ENCODE measurements at regions of chr12 and their contacts with region 1.

Region 1: DNA sequence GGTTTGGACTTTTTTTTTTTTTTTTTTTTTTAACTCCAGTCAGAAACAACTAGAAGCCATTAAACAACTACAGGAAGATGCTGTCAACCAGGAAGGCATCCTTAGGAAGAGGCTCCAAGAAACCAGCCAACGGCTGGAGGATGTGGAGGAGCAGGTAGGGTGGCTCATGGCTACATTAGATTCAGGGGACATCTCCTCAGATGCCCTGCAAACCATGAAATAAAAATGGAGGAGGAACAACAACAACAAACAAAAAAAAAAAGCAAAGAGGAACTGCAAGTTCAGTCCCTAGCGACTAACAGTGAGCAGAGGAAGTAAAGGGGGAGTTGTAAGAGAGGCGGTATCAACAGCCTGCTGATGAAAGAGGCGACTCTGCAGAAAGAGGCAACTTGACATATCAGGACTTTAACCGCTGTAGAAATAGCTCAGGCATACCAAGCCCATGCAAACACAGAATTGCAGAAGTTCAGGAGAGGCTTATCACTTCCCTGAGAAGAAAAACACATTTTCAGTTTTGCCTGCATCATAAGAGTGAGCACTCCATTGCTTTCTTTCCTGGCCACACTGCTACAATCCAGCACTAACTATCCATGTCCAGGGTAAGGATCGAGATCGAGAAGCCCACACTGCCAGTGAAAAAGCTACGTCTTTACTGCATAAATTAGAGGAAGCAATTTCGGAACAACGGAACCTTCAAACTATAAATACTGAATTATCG is 103.5 kb upstream of the BCAT1 start:
- DNase-seq: peak; percentile 64
- ATAC-seq: peak; percentile 72
- H3K4me3 Mint-ChIP-seq: peak overlapping the region; percentile 96
- H3K27ac Mint-ChIP-seq: peak overlapping the region; percentile 100
- H3K4me1 Mint-ChIP-seq: peaks cover 32% of the 10 kb centered on the region
- H3K27me3 Mint-ChIP-seq: no peaks in the 10 kb centered on the region
- CTCF ChIP-seq: no peak

Region 2: GRCh38 chr12:24600996-24601395 is 451.4 kb before region 1 on chr12:
- CTCF ChIA-PET with region 1: no interaction called
- POLR2A ChIA-PET with region 1: no interaction called
- intact Hi-C with region 1: no loop called
- DNase-seq: no peak
- ATAC-seq: peak; percentile 37
- H3K4me3 Mint-ChIP-seq: no peak overlapping the region
- H3K27ac Mint-ChIP-seq: no peak overlapping the region
- H3K4me1 Mint-ChIP-seq: peaks cover 3% of the 10 kb centered on the region
- H3K27me3 Mint-ChIP-seq: peaks cover 2% of the 10 kb centered on the region
- CTCF ChIP-seq: no peak

Region 3: GRCh38 chr12:24902511-24903328 is 149.6 kb before region 1 on chr12:
- CTCF ChIA-PET with region 1: no interaction called
- POLR2A ChIA-PET with region 1: no interaction called
- intact Hi-C with region 1: loop called (anchors 5 kb)
- DNase-seq: peak; percentile 64
- ATAC-seq: peak; percentile 45
- H3K4me3 Mint-ChIP-seq: peak overlapping the region; percentile 87
- H3K27ac Mint-ChIP-seq: peak overlapping the region; percentile 88
- H3K4me1 Mint-ChIP-seq: peaks cover 35% of the 10 kb centered on the region
- H3K27me3 Mint-ChIP-seq: peaks cover 17% of the 10 kb centered on the region
- CTCF ChIP-seq: no peak

Region 4: DNA sequence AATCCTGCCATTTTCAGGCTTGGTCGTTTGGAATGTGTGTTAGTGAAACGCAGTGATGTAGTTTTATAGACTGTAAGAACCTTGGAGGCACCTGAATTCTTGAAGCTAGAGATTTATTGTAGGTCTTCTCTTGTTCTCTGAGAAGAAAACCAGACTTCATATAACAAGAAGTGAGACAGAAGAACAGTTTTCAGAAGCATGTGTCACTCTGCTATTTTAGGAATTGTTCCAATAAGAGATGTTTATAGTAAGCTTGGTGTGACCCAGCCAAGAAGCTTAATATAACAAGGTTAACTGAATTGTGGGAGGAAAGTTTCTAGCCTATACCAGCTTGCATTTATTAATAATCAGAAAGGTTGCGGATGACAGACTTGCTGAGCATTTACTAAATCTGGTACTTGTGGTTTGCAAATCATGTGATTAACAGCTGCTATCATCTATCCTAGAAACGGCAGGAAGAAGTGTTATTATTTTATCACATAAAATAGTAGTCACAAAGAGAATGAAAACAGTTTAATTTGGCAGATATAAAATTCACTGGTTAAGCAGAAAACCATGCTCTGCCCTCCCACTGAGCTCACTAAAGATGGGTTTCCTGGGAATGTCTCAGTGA is 54.3 kb before region 1 on chr12:
- CTCF ChIA-PET with region 1: interaction called, 15 read pairs
- POLR2A ChIA-PET with region 1: interaction called, 4 read pairs
- intact Hi-C with region 1: loop called (anchors 5 kb)
- DNase-seq: no peak
- ATAC-seq: peak; percentile 87
- H3K4me3 Mint-ChIP-seq: no peak overlapping the region
- H3K27ac Mint-ChIP-seq: peak overlapping the region; percentile 17
- H3K4me1 Mint-ChIP-seq: peaks cover 16% of the 10 kb centered on the region
- H3K27me3 Mint-ChIP-seq: no peaks in the 10 kb centered on the region
- CTCF ChIP-seq: no peak

Region 5: DNA sequence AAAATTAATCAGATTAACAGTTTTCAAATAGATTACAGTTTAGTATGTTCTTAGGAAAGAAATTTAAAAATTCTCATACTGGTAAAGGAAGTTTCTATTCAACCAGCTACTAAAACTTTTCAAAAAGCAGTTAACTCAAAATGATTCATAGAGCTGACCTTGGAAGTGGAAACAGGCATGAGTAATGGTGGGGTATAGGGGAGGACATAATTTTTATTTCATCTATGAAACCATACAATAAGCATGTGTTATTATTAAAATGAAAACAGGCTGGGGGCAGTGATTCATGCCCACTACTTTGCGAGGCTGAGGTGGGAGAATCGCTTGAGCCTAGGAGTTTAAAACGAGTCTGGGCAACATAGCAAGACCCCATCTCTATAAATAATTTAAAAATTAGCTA is 69.6 kb after region 1 on chr12:
- CTCF ChIA-PET with region 1: interaction called, 3 read pairs
- POLR2A ChIA-PET with region 1: no interaction called
- intact Hi-C with region 1: loop called (anchors 5 kb)
- DNase-seq: peak; percentile 9
- ATAC-seq: peak; percentile 13
- H3K4me3 Mint-ChIP-seq: no peak overlapping the region
- H3K27ac Mint-ChIP-seq: no peak overlapping the region
- H3K4me1 Mint-ChIP-seq: peaks cover 4% of the 10 kb centered on the region
- H3K27me3 Mint-ChIP-seq: no peaks in the 10 kb centered on the region
- CTCF ChIP-seq: no peak